SK-N-SH (cell line): ENCODE measurements at regions of chr5 and their contacts with region 1.

Region 1: GRCh38 chr5:68252673-68253623 is 37.4 kb downstream of the PIK3R1 start:
- DNase-seq: peak; percentile 67
- H3K4me3 ChIP-seq: no peak overlapping the region
- H3K27ac ChIP-seq: peak overlapping the region; percentile 14 to 89; a peak in 3 of 4 replicates
- H3K4me1 ChIP-seq: peaks cover 45 to 59% of the 10 kb centered on the region in 2 experiments; a peak in 3 of 4 replicates
- H3K27me3 ChIP-seq: no peaks in the 10 kb centered on the region
- CTCF ChIP-seq: peak; percentile 88
- EP300 ChIP-seq: no peak
- RAD21 ChIP-seq: peak; percentile 96

Region 2: GRCh38 chr5:68215208-68215897 is 37.6 kb before region 1 on chr5 and contains the start of gene PIK3R1:
- CTCF ChIA-PET with region 1: interaction called, 72 read pairs
- POLR2A ChIA-PET with region 1: interaction called, 13 read pairs
- DNase-seq: peak; percentile 96
- H3K4me3 ChIP-seq: peak within 1 kb of the TSS; percentile 78 to 95
- H3K27ac ChIP-seq: peak within 1 kb of the TSS; percentile 97
- H3K4me1 ChIP-seq: peaks cover 12 to 14% of the 10 kb centered on the region in 2 experiments; a peak in 3 of 4 replicates
- H3K27me3 ChIP-seq: no peaks in the 10 kb centered on the region
- CTCF ChIP-seq: peak; percentile 46
- EP300 ChIP-seq: peak; percentile 5 to 39; a peak in 1 of 4 replicates
- RAD21 ChIP-seq: no peak
- polyA plus RNA-seq, gene PIK3R1: 2.0 and 2.7 TPM in 2 replicates

Region 3: DNA sequence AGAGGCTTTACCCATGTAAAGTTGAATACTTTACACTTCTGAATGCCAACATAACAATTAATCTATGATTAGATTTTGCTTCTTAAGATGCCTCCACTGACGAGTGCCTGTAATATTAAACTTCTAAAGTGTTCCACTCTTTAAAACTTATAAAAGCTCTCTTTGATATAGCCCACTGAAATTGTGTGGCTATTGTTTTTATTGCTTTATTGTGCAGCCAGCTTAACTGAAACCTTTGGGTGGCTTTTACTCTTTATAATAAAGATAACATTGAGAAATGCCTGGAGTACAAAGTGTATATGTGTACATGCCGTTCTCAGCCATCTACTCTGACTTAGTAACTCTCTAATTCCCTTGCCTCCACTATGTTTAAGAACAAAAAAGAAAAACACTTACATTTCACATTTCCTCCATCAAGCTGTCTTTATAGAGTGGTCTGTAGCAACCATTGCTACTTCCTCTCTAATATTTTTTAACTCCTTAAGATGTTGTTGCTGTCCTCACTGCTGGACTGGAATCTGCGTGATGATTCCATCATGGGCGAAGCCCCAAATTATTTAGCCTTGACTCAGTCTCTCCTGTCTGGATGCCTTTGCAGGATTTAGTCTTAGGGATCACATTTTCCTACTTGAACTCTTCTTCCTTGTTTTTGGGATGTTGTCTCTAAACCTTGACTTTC is 28.3 kb before region 1 on chr5:
- CTCF ChIA-PET with region 1: interaction called, 72 read pairs
- POLR2A ChIA-PET with region 1: no interaction called
- DNase-seq: no peak
- H3K4me3 ChIP-seq: no peak overlapping the region
- H3K27ac ChIP-seq: no peak overlapping the region
- H3K4me1 ChIP-seq: peaks cover 6 to 13% of the 10 kb centered on the region in 2 experiments; a peak in 3 of 4 replicates
- H3K27me3 ChIP-seq: no peaks in the 10 kb centered on the region
- CTCF ChIP-seq: no peak
- EP300 ChIP-seq: no peak
- RAD21 ChIP-seq: no peak

Region 4: GRCh38 chr5:68239487-68239886 is 13.5 kb before region 1 on chr5:
- CTCF ChIA-PET with region 1: interaction called, 10 read pairs
- POLR2A ChIA-PET with region 1: no interaction called
- DNase-seq: peak; percentile 72
- H3K4me3 ChIP-seq: no peak overlapping the region
- H3K27ac ChIP-seq: peak overlapping the region; percentile 28 to 94; a peak in 2 of 4 replicates
- H3K4me1 ChIP-seq: peaks cover 18% of the 10 kb centered on the region in 2 experiments
- H3K27me3 ChIP-seq: no peaks in the 10 kb centered on the region
- CTCF ChIP-seq: no peak
- EP300 ChIP-seq: peak in 1 of 2 experiments; percentile 71; a peak in 1 of 4 replicates
- RAD21 ChIP-seq: peak; percentile 34

Region 5: DNA sequence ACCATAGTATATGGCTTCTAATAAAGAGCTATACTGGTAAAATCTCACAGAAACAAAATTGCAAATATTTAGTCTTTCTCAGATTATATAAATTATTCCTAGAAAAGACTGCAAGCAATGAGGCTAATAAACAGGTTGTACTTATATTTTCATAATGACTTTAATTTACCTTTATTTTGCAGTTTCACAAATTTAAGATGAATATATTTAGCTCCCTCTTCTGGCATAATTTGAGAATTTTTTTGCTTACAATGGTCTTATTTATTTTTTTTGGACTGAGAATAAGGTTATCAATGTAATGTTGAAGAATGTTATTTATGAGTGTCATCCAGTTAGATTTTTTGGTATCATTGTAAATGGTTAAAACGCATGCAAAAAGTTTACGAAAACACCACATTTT is 19.3 kb after region 1 on chr5:
- CTCF ChIA-PET with region 1: interaction called, 38 read pairs
- POLR2A ChIA-PET with region 1: no interaction called
- DNase-seq: no peak
- H3K4me3 ChIP-seq: no peak overlapping the region; a peak in 1 of 4 replicates
- H3K27ac ChIP-seq: no peak overlapping the region; a peak in 2 of 4 replicates
- H3K4me1 ChIP-seq: peaks cover 19 to 25% of the 10 kb centered on the region in 2 experiments; a peak in 3 of 4 replicates
- H3K27me3 ChIP-seq: no peaks in the 10 kb centered on the region
- CTCF ChIP-seq: peak; percentile 70
- EP300 ChIP-seq: no peak
- RAD21 ChIP-seq: peak; percentile 52

Region 6: GRCh38 chr5:68343421-68343826 is 90.5 kb after region 1 on chr5:
- CTCF ChIA-PET with region 1: no interaction called
- POLR2A ChIA-PET with region 1: no interaction called
- DNase-seq: no peak
- H3K4me3 ChIP-seq: no peak overlapping the region
- H3K27ac ChIP-seq: no peak overlapping the region
- H3K4me1 ChIP-seq: no peaks in the 10 kb centered on the region; a peak in 1 of 4 replicates
- H3K27me3 ChIP-seq: no peaks in the 10 kb centered on the region
- CTCF ChIP-seq: no peak
- EP300 ChIP-seq: no peak
- RAD21 ChIP-seq: no peak